ENCODE measurements at regions of chr19 and their contacts with region 1.

Region 1: DNA sequence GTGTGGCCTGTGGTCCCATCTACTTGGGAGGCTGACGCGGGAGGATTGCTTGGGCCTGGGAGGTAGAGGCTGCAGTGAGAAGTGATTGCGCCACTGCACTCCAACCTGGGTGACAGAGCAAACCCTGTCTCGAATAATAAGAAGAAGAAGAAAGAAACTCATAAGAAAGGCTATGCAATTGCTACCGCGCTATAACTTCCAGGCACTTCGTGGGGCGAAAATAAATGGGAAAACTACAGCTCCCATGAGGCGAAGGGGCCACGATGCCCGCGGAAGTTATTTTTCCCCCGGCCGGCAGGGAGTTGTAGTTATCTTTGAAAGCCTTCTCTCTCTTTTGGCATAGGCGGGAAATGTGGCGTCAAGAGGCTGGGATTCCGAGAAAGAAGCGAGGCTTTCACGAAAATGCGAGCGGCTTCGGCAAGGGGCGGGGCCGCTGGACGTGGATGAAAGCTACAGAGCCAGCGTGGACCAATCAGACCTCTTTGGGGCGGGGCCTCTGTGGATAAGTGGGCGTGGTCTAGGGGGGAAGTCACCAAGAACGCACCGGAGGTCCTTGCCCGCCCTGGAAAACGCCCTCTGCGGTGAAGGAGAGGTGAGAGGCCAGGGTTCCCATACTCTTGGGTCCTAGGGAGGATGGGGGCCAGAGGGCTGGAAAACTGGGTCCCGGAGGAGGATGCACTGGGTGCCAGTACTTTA is at the start of gene NUCB1:
- DNase-seq: peak; percentile 97 to 99 (median 97)
- H3K4me3 ChIP-seq: peak within 1 kb of the TSS; percentile 73 to 85
- H3K4me3 Mint-ChIP-seq: peak within 1 kb of the TSS; percentile 92 to 99 (median 98)
- H3K27ac ChIP-seq: peak within 1 kb of the TSS; percentile 81
- H3K27ac Mint-ChIP-seq: peak within 1 kb of the TSS; percentile 88 to 97 (median 95)
- H3K4me1 ChIP-seq: peaks cover 30% of the 10 kb centered on the region
- H3K4me1 Mint-ChIP-seq: peaks cover 18 to 49% (median 29%) of the 10 kb centered on the region in 4 donors
- H3K27me3 ChIP-seq: peaks cover 4% of the 10 kb centered on the region
- H3K27me3 Mint-ChIP-seq: peaks cover under 1 to 2% of the 10 kb centered on the region in 2 donors
- total RNA-seq, gene NUCB1: 132 to 145 TPM

Region 2: DNA sequence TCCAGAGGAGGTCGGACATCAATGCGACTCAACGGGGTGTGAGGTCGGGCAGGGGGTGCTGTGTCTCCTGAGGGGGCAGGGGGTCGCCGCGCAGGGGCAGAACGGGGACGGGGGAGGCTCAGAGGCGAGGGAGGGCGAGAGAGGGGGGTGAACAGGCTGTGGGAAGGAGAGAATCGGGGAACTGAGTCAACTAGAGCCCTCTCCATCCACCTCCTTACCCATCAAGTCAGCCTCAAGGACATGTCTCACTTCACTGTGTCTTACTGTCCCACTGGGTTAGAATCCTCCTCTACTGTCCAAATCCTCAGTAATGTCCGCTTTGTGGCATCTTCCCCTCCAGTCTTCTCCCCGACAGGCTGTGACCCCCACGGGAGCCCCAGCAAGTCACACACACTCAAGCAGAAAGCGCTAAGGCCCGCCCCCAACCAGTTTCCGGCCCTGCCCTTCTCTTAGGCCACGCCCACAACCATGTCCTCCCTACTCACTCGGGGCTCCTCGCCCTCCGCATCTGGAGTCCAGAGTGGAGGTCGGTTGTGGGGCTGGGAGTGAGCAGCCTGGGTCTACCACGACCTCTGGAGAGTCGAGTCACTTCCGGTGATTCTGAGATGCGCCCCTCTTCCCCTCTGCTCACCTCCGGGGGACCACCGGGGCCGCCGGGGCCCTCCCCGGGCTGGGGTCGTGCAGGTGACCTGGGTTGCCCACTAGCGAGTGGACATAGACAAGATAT is 40.8 kb before region 1 on chr19:
- CTCF ChIA-PET with region 1: interaction called, 5 read pairs
- POLR2A ChIA-PET with region 1: interaction called, 3 read pairs
- intact Hi-C with region 1: loop called (anchors 10 kb)
- DNase-seq: peak; percentile 72 to 82 (median 75)
- H3K4me3 ChIP-seq: peak overlapping the region; percentile 45 to 55
- H3K4me3 Mint-ChIP-seq: peak overlapping the region; percentile 90 to 99 (median 94)
- H3K27ac ChIP-seq: peak overlapping the region; percentile 35
- H3K27ac Mint-ChIP-seq: peak overlapping the region; percentile 75 to 98 (median 93)
- H3K4me1 ChIP-seq: peaks cover 14% of the 10 kb centered on the region
- H3K4me1 Mint-ChIP-seq: peaks cover 2 to 10% (median 6%) of the 10 kb centered on the region in 4 donors
- H3K27me3 ChIP-seq: no peaks in the 10 kb centered on the region
- H3K27me3 Mint-ChIP-seq: no peaks in the 10 kb centered on the region

Region 3: DNA sequence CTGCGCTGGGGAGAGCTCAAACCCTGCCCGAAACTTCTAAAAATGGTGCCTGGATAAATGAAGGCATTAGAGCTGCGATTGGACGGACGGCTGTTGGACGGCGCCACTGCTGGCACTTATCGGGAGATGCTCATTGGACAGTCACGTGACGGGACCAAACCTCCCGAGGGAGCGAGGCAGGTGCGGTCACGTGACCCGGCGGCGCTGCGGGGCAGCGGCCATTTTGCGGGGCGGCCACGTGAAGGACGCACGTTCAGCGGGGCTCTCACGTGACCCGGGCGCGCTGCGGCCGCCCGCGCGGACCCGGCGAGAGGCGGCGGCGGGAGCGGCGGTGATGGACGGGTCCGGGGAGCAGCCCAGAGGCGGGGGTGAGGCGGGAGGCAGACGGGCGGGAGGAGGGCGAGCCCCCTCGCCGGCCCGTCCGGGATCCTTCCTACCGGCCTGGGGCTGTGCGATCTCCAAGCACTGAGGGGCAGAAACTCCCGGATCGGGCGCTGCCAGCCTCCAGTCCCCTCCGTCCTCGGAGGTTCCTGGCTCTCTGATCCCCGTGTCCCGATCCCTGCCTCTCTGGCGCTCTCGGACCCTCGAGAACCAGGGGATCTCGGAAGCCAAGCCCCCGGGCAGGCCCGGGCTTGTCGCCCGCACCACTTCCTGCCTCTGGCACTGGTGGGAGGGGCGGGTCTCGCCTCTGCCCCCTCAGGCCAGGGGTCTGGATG is 54.8 kb after region 1 on chr19 and contains the start of gene BAX:
- CTCF ChIA-PET with region 1: no interaction called
- POLR2A ChIA-PET with region 1: interaction called, 10 read pairs
- intact Hi-C with region 1: no loop called
- DNase-seq: peak; percentile 69 to 81 (median 74)
- H3K4me3 ChIP-seq: peak within 1 kb of the TSS; percentile 76 to 87
- H3K4me3 Mint-ChIP-seq: peak within 1 kb of the TSS; percentile 79 to 94 (median 90)
- H3K27ac ChIP-seq: peak within 1 kb of the TSS; percentile 86
- H3K27ac Mint-ChIP-seq: peak within 1 kb of the TSS; percentile 77 to 92 (median 86)
- H3K4me1 ChIP-seq: peaks cover 23% of the 10 kb centered on the region
- H3K4me1 Mint-ChIP-seq: peaks cover 12 to 34% (median 27%) of the 10 kb centered on the region in 4 donors
- H3K27me3 ChIP-seq: no peaks in the 10 kb centered on the region
- H3K27me3 Mint-ChIP-seq: no peaks in the 10 kb centered on the region
- total RNA-seq, gene BAX: 173 to 183 TPM

Region 4: GRCh38 chr19:49106648-49107135 is 206.8 kb after region 1 on chr19:
- CTCF ChIA-PET with region 1: no interaction called
- POLR2A ChIA-PET with region 1: no interaction called
- intact Hi-C with region 1: no loop called
- DNase-seq: peak; percentile 55 to 59 (median 57)
- H3K4me3 ChIP-seq: no peak overlapping the region
- H3K4me3 Mint-ChIP-seq: peak overlapping the region in 1 of 8 donors; percentile 4
- H3K27ac ChIP-seq: no peak overlapping the region
- H3K27ac Mint-ChIP-seq: peak overlapping the region in 3 of 7 donors; percentile 15 to 74 (median 64)
- H3K4me1 ChIP-seq: no peaks in the 10 kb centered on the region
- H3K4me1 Mint-ChIP-seq: peaks cover 0 to 11% (median 3%) of the 10 kb centered on the region in 4 donors
- H3K27me3 ChIP-seq: no peaks in the 10 kb centered on the region
- H3K27me3 Mint-ChIP-seq: no peaks in the 10 kb centered on the region

Measured in CD4-positive, alpha-beta memory T cell (primary cell).